RWPE1 (cell line): ENCODE measurements at regions of chr10 and their contacts with region 1.

Region 1: DNA sequence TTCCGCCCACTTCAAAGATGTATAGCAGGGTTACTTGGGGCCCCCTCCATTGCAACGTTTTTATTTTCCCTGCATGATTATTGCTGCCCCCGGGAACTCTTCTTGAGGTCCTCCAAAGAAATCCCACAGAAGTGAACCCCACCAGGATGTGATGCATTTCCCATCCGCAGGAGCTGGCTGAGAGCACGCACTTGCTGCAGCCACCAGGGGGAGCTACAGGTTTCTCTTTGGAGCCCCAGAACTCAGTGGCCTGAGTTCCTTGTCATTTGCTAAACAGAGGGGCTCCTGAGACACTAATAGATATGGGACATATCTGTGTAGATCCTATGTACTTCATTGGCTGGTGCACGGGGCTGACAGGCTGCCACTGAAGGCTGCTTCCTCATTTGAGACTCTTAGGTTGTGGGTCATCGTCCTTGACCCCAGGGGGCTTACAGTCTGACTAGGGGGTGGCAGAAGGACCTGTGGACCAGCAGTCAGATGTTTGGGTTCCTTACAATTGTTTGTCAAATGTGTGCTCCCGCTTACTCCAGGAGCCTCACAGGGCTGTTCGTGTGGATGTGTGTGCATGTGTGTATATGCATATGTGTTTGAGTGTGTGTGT is 52.3 kb upstream of the ENO4 start:
- DNase-seq: peak; percentile 81
- H3K27ac ChIP-seq: no peak overlapping the region
- CTCF ChIP-seq: peak; percentile 88

Region 2: GRCh38 chr10:116408719-116409118 is 388.3 kb before region 1 on chr10:
- CTCF ChIA-PET with region 1: no interaction called
- POLR2A ChIA-PET with region 1: no interaction called
- DNase-seq: no peak
- H3K27ac ChIP-seq: no peak overlapping the region
- CTCF ChIP-seq: no peak

Region 3: DNA sequence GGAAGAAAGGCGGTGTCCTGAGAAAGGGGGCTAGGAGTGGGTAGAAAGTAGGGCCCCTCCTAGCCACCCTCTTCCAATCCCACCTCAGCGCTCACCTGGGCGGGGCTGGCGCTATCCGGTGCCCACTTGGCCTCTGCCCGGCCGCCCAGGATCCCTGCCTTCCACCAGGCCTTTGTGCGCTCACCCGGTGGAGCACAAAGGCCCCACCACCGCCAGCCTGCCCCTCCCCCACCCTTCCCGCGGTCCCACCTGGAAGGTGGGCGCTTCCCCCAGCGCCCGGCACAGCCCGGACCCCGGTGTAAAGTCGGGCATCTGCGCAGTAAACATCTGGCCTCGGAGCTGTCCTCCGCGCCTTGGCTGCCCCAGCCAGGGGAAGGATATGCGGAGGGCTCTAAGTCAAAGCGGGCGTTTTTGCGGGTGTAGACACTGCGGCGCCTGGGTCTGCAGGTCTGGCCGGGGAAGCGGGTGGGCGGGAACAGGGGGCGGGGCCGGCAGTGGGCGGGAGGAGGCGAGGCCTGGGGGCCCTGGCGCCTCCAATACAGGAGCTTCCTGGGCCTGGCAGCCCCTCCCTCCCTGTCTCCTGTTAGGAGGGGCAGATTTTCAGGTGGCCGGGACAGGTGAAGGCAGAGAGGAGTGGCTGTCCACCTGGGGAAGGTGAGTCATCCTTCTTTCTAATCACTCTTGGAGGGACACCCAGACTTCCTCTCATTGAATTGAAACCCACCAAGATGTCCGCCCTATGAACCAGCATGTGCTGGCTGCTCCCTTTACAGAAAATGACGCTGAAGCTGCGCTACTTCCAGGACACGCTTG is 127.0 kb before region 1 on chr10:
- CTCF ChIA-PET with region 1: no interaction called
- POLR2A ChIA-PET with region 1: no interaction called
- DNase-seq: peak; percentile 23
- H3K27ac ChIP-seq: no peak overlapping the region
- CTCF ChIP-seq: no peak

Region 4: GRCh38 chr10:116809483-116810119 is 12.6 kb after region 1 on chr10:
- CTCF ChIA-PET with region 1: interaction called, 11 read pairs
- POLR2A ChIA-PET with region 1: no interaction called
- DNase-seq: peak; percentile 30
- H3K27ac ChIP-seq: no peak overlapping the region
- CTCF ChIP-seq: peak; percentile 54

Region 5: GRCh38 chr10:117167789-117168674 is 371.0 kb after region 1 on chr10:
- CTCF ChIA-PET with region 1: interaction called, 63 read pairs
- POLR2A ChIA-PET with region 1: no interaction called
- DNase-seq: peak; percentile 83
- H3K27ac ChIP-seq: no peak overlapping the region
- CTCF ChIP-seq: peak; percentile 85

Region 6: GRCh38 chr10:117174439-117175214 is 377.6 kb after region 1 on chr10:
- CTCF ChIA-PET with region 1: interaction called, 65 read pairs
- POLR2A ChIA-PET with region 1: no interaction called
- DNase-seq: peak; percentile 93
- H3K27ac ChIP-seq: no peak overlapping the region
- CTCF ChIP-seq: peak; percentile 90